Activated T-helper 2 cell treated with anti-CD3 and anti-CD28 coated beads, Interferon-gamma antibody, Interleukin-2, Interleukin-4, amounts not matched to agents 10 μg/mL and 5 μg/mL and 100 μg/mL, durations not matched to agents 14 hours and 24 hours and 36 hours (primary cell): ENCODE measurements at regions of chr6 and their contacts with region 1.

Region 1: DNA sequence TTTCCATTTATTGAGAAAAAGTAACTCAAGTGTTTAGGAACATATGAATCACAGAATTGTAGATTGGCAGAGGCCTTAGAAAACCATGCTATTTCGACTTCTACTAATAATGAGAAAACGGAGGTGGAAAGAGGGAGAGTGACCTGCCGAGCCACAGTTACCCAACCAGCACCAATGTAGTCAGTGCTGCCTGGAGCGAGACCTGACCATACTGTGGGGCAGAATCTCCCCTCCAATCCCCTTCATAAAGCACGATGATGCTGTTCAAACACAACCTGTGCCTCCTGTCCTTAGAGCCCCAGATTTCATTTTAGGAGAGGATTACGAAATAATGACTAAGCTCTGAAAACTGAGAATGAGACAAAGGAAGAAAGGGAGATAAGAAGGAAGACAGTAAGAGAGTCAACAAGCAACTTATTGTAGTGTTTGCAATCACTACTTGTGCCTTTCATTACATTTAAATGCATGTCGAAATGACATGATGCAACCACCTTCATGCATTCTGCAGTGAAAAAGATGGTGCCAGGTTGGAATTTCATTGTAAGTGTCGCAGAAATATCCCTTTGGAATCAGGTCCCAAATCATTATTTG is 70.6 kb downstream of the ATXN1 start:
- DNase-seq: no peak
- H3K4me3 Mint-ChIP-seq: peak overlapping the region; percentile 51
- H3K27ac Mint-ChIP-seq: peak overlapping the region; percentile 93
- H3K4me1 Mint-ChIP-seq: peaks cover 76% of the 10 kb centered on the region
- H3K27me3 Mint-ChIP-seq: no peaks in the 10 kb centered on the region

Region 2: GRCh38 chr6:15770347-15771143 is 920.2 kb before region 1 on chr6:
- intact Hi-C with region 1: loop called (anchors 10 kb)
- DNase-seq: peak; percentile 12
- H3K4me3 Mint-ChIP-seq: peak overlapping the region; percentile 65
- H3K27ac Mint-ChIP-seq: peak overlapping the region; percentile 98
- H3K4me1 Mint-ChIP-seq: peaks cover 59% of the 10 kb centered on the region
- H3K27me3 Mint-ChIP-seq: no peaks in the 10 kb centered on the region

Region 3: GRCh38 chr6:15987569-15987968 is 703.1 kb before region 1 on chr6:
- intact Hi-C with region 1: no loop called
- DNase-seq: no peak
- H3K4me3 Mint-ChIP-seq: no peak overlapping the region
- H3K27ac Mint-ChIP-seq: no peak overlapping the region
- H3K4me1 Mint-ChIP-seq: peaks cover 42% of the 10 kb centered on the region
- H3K27me3 Mint-ChIP-seq: no peaks in the 10 kb centered on the region

Region 4: GRCh38 chr6:16670183-16670582 is 20.5 kb before region 1 on chr6:
- intact Hi-C with region 1: loop called (anchors 1 kb)
- DNase-seq: no peak
- H3K4me3 Mint-ChIP-seq: peak overlapping the region; percentile 50
- H3K27ac Mint-ChIP-seq: peak overlapping the region; percentile 89
- H3K4me1 Mint-ChIP-seq: peaks cover 74% of the 10 kb centered on the region
- H3K27me3 Mint-ChIP-seq: no peaks in the 10 kb centered on the region

Region 5: DNA sequence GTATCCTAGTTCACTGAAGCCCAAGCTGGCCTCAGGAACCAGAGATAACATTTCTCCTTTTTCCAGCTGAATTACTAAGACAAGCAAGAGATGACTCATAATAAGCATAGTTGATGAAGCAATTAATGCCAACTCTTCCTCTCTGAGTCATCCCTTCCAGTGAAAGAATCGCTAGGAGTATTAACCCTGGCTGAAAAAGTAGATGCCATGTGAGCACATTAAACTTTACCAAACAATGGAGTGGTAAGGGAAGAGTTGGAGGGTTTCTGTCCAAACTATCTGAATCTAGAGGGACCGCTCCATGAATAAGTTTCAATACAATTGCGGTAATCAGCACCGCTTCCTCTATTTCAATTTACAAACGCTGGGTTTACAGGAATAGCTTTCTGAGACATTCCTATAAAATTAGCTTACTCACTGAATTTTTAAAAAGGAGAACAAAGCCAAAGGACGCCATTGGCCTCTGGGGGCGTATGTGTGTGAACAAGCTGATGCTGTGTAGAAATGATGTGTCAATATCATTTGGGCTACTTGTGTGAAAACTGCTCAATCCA is 22.3 kb after region 1 on chr6:
- intact Hi-C with region 1: loop called (anchors 1 kb)
- DNase-seq: no peak
- H3K4me3 Mint-ChIP-seq: peak overlapping the region; percentile 62
- H3K27ac Mint-ChIP-seq: peak overlapping the region; percentile 91
- H3K4me1 Mint-ChIP-seq: peaks cover 66% of the 10 kb centered on the region
- H3K27me3 Mint-ChIP-seq: no peaks in the 10 kb centered on the region

Region 6: DNA sequence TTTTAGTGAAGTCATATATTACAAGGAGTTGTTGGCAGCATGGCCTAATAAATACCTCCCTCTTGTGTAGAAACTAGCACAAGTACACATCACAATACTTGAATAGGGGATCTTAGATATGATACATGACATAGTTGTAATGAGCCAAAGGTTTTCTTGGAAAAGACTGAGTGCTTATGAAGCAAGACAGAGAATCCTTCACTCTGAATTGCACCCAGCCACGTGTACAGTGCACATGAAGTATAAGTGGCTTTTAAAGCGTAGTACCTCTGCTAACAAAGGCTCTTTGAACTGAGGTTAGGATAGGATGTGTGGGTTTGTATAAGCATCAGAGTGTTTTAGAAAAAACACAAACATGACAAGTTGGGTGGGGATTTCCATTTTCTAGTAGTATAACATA is 265.7 kb after region 1 on chr6:
- intact Hi-C with region 1: loop called (anchors 10 kb)
- DNase-seq: no peak
- H3K4me3 Mint-ChIP-seq: no peak overlapping the region
- H3K27ac Mint-ChIP-seq: peak overlapping the region; percentile 81
- H3K4me1 Mint-ChIP-seq: peaks cover 43% of the 10 kb centered on the region
- H3K27me3 Mint-ChIP-seq: peaks cover 37% of the 10 kb centered on the region

Region 7: GRCh38 chr6:17178754-17179529 is 488.2 kb after region 1 on chr6:
- intact Hi-C with region 1: no loop called
- DNase-seq: no peak
- H3K4me3 Mint-ChIP-seq: no peak overlapping the region
- H3K27ac Mint-ChIP-seq: no peak overlapping the region
- H3K4me1 Mint-ChIP-seq: no peaks in the 10 kb centered on the region
- H3K27me3 Mint-ChIP-seq: no peaks in the 10 kb centered on the region